Dorsolateral prefrontal cortex (tissue), 120 donors: ENCODE measurements at regions of chr1 and their contacts with region 1.

Region 1: DNA sequence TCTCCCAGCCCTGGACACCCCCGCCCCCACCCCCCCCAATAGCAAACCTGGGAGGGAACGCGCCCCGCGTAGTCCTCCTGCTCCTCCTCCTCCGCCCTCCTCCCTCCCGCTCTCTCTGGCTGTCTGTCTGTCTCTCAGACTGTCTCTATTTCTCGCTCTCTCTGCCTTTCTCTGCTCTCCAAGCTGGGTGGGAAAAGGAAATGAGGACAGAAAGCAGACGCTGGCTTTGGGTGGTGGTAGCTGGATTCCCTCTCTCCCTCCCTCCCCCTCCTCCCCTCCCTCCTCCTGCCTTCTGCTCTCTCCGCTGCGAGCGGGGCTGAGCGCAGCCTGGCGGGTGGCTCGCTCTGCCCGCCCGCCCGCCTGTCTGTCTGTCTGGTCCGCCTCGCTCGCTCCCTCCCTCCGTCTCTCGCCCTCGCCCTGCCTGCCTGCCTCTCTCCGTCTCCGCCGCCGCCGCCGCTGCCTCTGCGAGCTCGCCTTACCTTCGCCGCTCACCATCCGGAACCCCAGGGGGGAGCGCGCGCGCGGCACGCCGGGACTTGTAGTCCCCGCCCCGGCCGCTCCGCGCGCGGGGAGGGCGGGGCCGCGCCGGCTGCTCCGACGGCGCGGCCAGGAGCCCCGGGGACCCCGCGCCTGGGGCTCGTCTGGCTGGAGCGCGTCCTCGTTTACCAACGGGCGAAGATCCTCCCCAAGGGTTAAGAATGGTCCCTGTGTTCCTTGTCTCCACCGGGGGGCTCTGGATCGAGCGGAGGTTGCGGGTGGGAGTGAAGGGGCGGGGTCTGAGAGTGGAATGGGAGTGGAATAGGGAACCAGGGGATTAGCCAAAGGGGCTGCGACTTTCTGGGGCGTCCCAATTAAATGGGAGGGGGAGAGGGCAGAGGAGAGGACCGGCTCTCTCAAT is at the start of gene AHDC1:
- DNase-seq: peak; percentile 72 to 92 (median 89)
- H3K4me3 ChIP-seq: peak within 1 kb of the TSS; percentile 55 to 98 (median 90)
- H3K27ac ChIP-seq: peak within 1 kb of the TSS in 58 of 59 donors; percentile 17 to 97 (median 91)
- H3K27me3 ChIP-seq: no peaks in the 10 kb centered on the region
- CTCF ChIP-seq: peak in 25 of 56 donors; percentile 10 to 58 (median 26)
- total RNA-seq, gene AHDC1: 57.6 to 160 (median 87.2) TPM

Region 2: DNA sequence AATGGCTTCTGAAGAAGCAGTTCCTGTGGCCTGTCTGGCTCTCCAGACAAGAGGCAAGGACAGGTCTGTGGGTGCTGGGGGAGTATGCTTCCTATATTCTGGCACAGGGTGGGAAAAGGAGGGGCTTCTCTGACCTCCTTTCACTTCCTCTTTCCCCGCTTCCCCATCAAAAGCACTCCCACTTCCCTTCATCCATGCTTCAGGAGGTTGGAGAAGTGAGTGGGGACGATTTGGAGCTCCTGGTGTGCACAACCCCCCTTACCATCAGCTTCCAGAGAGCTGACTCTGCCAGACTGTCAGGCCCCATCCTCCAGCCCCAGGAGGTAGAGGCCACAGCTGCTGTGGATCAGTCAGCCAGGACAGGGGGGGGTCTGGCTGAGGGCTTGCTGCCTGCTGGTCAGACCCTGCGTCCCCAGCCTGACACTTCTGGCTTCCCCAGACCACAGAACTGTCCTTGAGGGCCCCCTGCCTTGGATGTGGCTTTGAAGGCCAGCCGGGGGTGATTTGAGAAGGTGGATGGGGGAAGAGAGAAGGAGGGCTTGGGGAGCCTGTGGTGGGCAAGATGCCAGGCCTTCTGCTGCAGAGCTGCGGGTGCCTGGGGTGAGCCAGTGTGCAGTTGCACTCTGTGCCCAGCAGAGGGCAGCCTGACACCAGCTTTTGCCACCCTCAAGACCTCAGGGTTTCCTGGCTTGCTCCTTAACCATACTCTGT is 303.4 kb before region 1 on chr1:
- intact Hi-C with region 1: loop called in 1 of 2 experiments (anchors 1 kb)
- DNase-seq: peak; percentile 71 to 91 (median 86)
- H3K4me3 ChIP-seq: no peak overlapping the region
- H3K27ac ChIP-seq: peak overlapping the region in 58 of 59 donors; percentile 27 to 97 (median 85)
- H3K27me3 ChIP-seq: no peaks in the 10 kb centered on the region
- CTCF ChIP-seq: peak; percentile 83 to 100 (median 99)

Region 3: DNA sequence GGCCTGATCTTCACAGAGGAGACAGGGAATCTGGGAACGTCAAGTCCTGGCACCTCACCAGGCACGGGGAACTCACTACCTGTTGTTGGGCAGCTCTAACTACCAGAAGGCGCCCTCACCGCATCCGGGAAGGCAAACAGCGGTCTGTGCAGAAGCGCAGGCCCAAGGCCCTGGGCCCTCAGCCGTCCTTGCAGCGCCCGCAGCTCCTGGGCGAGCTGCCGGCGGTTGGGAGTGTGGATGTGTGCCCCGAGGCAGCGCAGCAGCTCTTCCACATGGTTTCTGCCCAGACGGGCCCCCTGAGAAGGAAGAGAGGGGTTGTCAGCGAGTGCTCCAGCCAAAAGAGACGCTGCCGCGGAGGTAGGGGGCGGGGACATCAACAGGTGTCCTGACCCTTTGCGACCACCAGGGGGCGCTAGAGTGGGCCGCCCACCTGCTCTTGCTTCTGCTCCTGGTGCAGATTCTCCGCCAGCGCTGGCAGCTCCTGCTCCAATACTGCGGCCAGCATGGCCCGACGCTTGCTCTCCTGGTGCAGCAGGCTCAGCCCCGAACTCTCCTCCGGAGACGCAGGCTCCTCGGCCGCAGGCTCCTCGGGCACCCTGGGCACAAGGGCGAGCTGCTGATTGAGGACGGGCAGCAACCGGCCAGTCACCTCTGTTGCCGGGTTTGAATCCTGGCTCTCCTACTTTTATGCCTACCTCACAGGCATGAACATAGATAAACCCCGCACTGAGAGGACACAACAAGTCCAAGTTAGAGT is 246.5 kb before region 1 on chr1:
- intact Hi-C with region 1: no loop called
- DNase-seq: peak; percentile 50 to 84 (median 60)
- H3K4me3 ChIP-seq: peak overlapping the region in 36 of 59 donors; percentile 6 to 54 (median 37)
- H3K27ac ChIP-seq: peak overlapping the region in 1 of 59 donors; percentile 6
- H3K27me3 ChIP-seq: no peaks in the 10 kb centered on the region
- CTCF ChIP-seq: peak; percentile 63 to 99 (median 95)

Region 4: DNA sequence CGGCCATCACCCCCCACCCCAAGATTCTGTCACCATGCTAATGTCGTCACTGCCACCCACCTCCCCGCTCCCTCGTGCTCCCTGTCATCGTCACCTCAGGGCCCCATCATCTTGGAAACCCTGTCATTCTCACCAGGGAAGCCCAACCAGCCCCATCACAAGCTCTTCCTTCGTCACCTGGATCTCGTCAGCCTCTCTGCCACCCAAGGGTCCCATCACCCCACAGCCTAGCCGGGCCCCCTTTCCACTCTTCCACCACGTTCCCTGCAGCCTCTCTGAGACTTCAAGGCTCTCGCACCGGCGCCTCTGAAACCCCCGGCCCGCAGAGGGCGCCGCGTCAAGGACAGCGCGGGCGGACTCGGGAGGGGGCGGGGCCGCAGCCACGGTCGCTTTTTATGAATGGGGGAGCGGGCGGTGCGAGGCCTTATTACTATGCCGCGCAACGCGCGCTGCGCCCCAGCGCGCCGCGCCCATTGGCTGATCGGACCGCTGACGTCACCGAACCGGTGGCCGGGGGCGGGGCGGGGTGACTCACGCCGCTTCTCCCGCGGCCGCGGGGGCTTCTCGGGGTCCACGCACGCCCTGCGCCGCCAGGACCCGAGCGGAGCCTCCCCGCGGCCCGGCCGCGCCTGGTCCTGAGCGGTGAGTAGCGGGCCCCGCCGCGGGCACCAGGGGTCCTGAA is 211.7 kb before region 1 on chr1 and contains the start of gene GPR3:
- intact Hi-C with region 1: loop called (anchors 2 to 5 kb)
- DNase-seq: peak; percentile 81 to 93 (median 90)
- H3K4me3 ChIP-seq: peak within 1 kb of the TSS; percentile 41 to 82 (median 68)
- H3K27ac ChIP-seq: peak within 1 kb of the TSS in 48 of 59 donors; percentile 21 to 92 (median 66)
- H3K27me3 ChIP-seq: no peaks in the 10 kb centered on the region
- CTCF ChIP-seq: peak; percentile 15 to 77 (median 64)
- total RNA-seq, gene GPR3: 0.29 to 10.1 (median 2.2) TPM

Region 5: DNA sequence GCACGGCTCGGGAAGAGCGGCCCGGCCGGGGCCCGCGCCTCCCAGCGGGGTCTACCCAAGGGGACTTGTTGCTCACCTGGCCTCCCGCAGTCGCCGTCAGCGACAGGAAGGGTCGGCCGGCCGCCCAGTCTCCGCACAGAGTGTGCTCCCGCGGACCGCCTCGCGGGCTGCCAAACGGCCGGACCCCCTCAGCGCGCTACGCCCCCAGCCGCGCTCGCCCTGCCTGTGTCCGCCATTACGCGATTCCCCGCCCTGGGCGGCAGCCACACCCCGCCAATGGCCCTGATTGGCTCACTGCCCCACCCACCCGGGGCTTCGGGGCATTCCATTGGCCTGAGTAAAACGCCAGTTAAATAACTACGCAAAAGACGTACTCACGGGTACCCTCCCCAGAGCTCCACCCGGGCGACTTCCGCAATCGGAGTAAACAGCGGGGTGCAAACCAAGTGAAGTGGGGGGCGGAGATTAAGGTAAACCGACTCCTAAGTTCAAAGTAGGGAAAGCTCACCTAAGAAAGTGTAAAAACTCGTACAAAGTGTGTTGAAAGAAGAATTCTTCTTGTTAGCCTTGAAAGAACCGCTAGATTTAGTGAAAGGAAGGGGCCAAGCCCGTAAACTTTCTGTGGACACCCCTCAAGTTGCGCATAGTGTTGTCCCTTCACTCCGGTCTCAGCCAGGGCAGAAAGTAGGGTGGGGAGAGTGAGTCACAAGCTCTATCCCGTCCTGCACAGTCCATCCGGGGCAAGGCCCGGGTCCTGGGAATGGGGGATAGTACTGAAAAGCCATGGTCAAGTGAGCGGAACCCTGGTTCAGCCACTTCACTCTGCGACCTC is 113.8 kb before region 1 on chr1 and contains the start of gene WASF2:
- intact Hi-C with region 1: loop called in 1 of 2 experiments (anchors 5 kb)
- DNase-seq: peak; percentile 95 to 98 (median 97)
- H3K4me3 ChIP-seq: peak within 1 kb of the TSS; percentile 80 to 100 (median 99)
- H3K27ac ChIP-seq: peak within 1 kb of the TSS; percentile 95 to 100 (median 99)
- H3K27me3 ChIP-seq: no peaks in the 10 kb centered on the region
- CTCF ChIP-seq: peak in 21 of 56 donors; percentile 5 to 42 (median 22)
- total RNA-seq, gene WASF2: 36.2 to 128 (median 63.6) TPM

Region 6: DNA sequence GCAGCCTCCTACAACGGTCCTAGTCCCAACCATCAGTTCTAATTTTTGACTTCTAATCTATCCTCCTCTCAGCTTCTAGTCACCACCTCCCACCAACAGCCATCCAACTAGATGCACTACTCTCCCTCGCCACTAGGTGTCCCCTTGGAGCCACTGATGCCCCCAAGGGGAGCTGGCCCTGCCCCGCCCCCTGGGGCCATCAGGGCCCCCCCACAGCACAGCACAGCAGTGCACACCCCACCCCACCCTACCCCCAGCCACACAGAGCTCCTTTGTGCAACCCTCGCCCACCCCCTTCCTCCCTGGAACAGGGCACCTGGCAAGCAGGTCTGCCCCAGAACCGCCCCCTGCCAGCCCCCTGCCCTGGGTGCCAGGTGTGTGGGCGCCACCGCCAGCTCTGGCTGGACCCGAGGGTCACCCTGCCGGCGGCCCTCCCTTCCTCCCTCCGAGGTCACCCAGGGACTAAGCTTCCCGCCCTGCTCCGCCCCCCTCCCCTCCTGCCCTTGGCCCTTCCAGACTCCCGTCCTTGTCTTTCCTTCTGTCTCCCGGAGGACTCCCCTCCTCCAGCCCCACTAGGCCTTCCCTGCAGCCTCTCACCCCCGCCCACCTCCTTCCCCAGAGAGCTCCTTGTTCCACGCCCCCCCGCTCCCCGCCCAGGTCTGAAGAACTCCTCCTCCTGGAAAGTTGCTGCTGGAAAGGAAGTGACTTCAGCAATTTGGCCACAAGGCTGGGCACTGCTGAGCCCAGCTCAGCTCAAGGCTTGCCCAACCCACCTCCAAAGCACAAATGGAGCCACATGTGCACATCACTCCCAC is 46.9 kb before region 1 on chr1:
- intact Hi-C with region 1: loop called (anchors 1 to 2 kb)
- DNase-seq: peak in 9 of 10 donors; percentile 45 to 79 (median 72)
- H3K4me3 ChIP-seq: peak overlapping the region in 12 of 59 donors; percentile 2 to 27 (median 19)
- H3K27ac ChIP-seq: peak overlapping the region in 53 of 59 donors; percentile 20 to 91 (median 66)
- H3K27me3 ChIP-seq: no peaks in the 10 kb centered on the region
- CTCF ChIP-seq: peak; percentile 67 to 99 (median 94)

Region 7: GRCh38 chr1:27662707-27663393 is 58.9 kb after region 1 on chr1:
- intact Hi-C with region 1: loop called in 1 of 2 experiments (anchors 1 kb)
- DNase-seq: peak; percentile 62 to 94 (median 84)
- H3K4me3 ChIP-seq: peak overlapping the region in 1 of 59 donors; percentile 10
- H3K27ac ChIP-seq: peak overlapping the region in 36 of 59 donors; percentile 4 to 76 (median 53)
- H3K27me3 ChIP-seq: no peaks in the 10 kb centered on the region
- CTCF ChIP-seq: peak; percentile 83 to 98 (median 94)

Region 8: GRCh38 chr1:27779122-27779521 is 175.2 kb after region 1 on chr1:
- intact Hi-C with region 1: no loop called
- DNase-seq: no peak
- H3K4me3 ChIP-seq: no peak overlapping the region
- H3K27ac ChIP-seq: no peak overlapping the region
- H3K27me3 ChIP-seq: no peaks in the 10 kb centered on the region
- CTCF ChIP-seq: no peak